Upper lobe of right lung (tissue), 1 donor: ENCODE measurements at regions of chr3 and their contacts with region 1.

Region 1: DNA sequence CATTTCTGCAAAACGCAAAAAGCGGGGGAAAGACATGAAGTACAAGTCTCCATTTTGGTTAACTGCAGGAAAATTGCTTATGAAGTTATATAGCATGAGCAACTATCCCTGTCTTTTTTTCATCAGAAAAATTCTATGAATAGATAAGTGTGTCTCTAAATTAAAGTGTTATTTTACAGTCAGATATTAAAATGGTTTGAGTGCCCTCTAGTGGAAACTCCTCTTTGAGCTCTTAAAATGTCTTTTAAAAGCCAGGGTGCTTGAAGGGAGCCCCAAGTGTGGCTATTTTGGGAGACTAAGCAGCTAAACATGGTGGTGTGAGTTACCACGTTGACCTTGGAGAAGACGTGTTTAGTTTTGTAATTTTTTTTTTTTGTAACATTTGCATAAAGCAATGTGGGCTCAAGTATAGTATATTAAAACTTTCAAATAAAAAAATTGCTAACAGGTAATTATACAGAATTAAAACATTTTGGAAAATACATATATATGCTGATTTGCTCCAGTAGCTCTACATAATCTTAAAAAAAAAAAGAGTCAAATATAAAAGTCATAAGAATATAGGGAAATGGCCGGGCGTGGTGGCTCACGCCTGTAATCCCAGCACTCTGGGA is 77.2 kb downstream of the PPP2R3A start:
- DNase-seq: no peak
- ATAC-seq: peak; percentile 50
- H3K4me3 ChIP-seq: no peak overlapping the region
- H3K27ac ChIP-seq: no peak overlapping the region
- H3K4me1 ChIP-seq: no peaks in the 10 kb centered on the region
- H3K27me3 ChIP-seq: no peaks in the 10 kb centered on the region
- CTCF ChIP-seq: peak; percentile 64

Region 2: DNA sequence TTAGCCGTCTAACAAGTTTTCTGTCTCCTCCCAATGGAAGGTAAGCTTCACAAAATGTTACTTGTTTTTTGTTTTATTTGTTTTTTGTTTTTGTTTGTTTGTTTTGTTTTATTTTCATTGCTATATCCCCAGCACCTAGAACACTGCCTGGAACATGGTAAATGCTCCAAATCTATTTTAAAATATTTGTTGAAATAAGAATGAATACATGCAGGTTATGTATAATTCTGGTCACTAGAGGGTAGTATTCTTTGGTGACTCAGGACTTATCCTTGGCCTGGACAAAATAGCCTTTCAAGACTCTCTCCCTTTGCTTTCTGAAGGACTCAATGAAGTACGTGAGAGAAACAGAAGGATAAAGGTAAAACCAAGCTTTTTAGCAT is 124.1 kb before region 1 on chr3:
- intact Hi-C with region 1: loop called (anchors 5 kb)
- DNase-seq: no peak
- ATAC-seq: peak; percentile 58
- H3K4me3 ChIP-seq: no peak overlapping the region
- H3K27ac ChIP-seq: no peak overlapping the region
- H3K4me1 ChIP-seq: no peaks in the 10 kb centered on the region
- H3K27me3 ChIP-seq: no peaks in the 10 kb centered on the region
- CTCF ChIP-seq: peak; percentile 46